Mammary epithelial cell (primary cell): ENCODE measurements at regions of chr2 and their contacts with region 1.

Region 1: GRCh38 chr2:237739101-237739500 is 59.5 kb upstream of the RBM44 start:
- DNase-seq: no peak
- H3K4me3 ChIP-seq: no peak overlapping the region
- H3K27ac ChIP-seq: no peak overlapping the region
- H3K4me1 ChIP-seq: no peaks in the 10 kb centered on the region
- H3K27me3 ChIP-seq: no peaks in the 10 kb centered on the region
- CTCF ChIP-seq: no peak

Region 2: DNA sequence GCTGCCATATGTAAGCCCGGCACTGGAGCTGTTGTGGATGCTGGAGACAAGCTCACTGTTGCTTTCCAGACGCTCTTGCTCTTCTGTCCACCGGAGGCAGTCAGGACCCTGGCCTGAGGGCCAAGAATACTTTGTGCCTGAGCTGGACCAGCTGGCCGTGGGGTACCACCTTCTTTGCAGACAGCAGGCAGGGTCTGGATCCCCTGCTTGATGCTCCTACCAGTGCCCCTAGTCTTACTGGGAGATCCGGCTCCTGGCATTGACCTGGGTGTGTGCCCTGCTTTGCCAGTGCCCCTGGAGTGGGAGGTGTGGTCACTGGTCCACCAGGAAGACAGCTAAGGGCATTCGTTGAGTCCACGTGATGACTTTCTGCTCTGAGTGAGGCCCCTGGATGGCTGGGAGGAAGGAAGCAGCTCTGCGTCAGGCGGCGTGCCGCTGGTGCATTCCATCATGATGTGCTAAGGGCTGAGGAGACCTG is 52.4 kb before region 1 on chr2:
- CTCF ChIA-PET with region 1: no interaction called
- dilution Hi-C with region 1: loop called (anchors 5 kb)
- in situ Hi-C with region 1: no loop called
- intact Hi-C with region 1: no loop called
- DNase-seq: no peak
- H3K4me3 ChIP-seq: no peak overlapping the region
- H3K27ac ChIP-seq: peak overlapping the region; percentile 98
- H3K4me1 ChIP-seq: peaks cover 41% of the 10 kb centered on the region
- H3K27me3 ChIP-seq: no peaks in the 10 kb centered on the region
- CTCF ChIP-seq: no peak